ENCODE measurements at regions of chr3 and their contacts with region 1.

Region 1: GRCh38 chr3:71031914-71032521 is 551.5 kb downstream of the FOXP1 start:
- DNase-seq: no peak
- ATAC-seq: no peak; the same call in 2 of the 3 replicates
- H3K4me3 ChIP-seq: no peak overlapping the region
- H3K27ac ChIP-seq: no peak overlapping the region
- H3K4me1 ChIP-seq: no peaks in the 10 kb centered on the region
- H3K27me3 ChIP-seq: no peaks in the 10 kb centered on the region
- CTCF ChIP-seq: no peak
- EP300 ChIP-seq: no peak
- POLR2A ChIP-seq: no peak
- RAD21 ChIP-seq: no peak

Region 2: DNA sequence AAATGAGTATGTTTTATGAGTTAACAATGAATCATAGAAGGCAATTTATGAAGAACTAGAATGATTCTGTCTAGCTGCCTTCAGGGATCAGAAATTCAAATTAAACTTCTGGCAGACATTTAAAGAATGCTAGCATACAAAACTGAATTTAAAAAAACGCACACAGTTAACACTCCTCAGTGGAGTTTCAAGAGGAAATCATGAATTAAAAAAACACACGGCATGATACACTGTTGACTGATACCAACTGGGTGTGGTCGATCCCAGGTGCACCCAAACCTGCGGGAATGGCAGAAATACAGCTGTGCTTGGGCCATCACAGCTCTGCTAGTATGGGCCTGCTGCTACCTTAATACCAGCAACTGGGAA is 25.5 kb after region 1 on chr3:
- CTCF ChIA-PET with region 1: no interaction called
- POLR2A ChIA-PET with region 1: no interaction called
- RAD21 ChIA-PET with region 1: no interaction called
- SMC1A ChIA-PET with region 1: no interaction called
- in situ Hi-C with region 1: no loop called
- intact Hi-C with region 1: loop called (anchors 2 kb)
- DNase-seq: no peak
- ATAC-seq: no peak
- H3K4me3 ChIP-seq: no peak overlapping the region
- H3K27ac ChIP-seq: no peak overlapping the region
- H3K4me1 ChIP-seq: no peaks in the 10 kb centered on the region
- H3K27me3 ChIP-seq: peaks cover 0 to 2% of the 10 kb centered on the region in 2 experiments; a peak in 2 of 4 replicates
- CTCF ChIP-seq: no peak
- EP300 ChIP-seq: no peak
- POLR2A ChIP-seq: no peak
- RAD21 ChIP-seq: no peak